ENCODE measurements at regions of chr3 and their contacts with region 1.

Region 1: DNA sequence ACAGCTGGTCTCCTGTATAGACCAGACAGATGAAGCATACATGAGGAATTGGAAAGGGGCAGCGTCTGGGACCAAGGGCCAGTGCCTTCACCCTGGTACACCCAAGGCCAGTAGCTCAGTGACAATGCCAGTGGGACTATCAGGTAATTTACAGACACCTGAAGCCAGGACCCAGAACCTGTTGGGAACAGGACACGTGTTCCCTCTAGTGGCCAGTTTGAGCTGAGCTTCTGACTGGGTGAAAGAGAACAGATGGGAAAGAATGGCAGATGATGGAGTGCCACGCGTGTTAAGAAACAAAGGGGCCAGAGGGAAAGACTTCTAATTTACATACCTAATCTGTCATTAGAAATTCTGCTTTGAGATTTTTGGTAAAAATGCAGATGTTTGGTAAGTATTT is 5.1 kb upstream of the SLC25A38 start:
- DNase-seq: peak in 8 of 9 donors; percentile 32 to 68 (median 62)
- ATAC-seq: peak; percentile 86
- H3K4me3 ChIP-seq: no peak overlapping the region
- H3K4me3 Mint-ChIP-seq: no peak overlapping the region
- H3K27ac ChIP-seq: no peak overlapping the region
- H3K27ac Mint-ChIP-seq: no peak overlapping the region
- H3K4me1 ChIP-seq: peaks cover 6% of the 10 kb centered on the region in 2 donors
- H3K4me1 Mint-ChIP-seq: peaks cover 0 to 20% (median 13%) of the 10 kb centered on the region in 7 donors
- H3K27me3 ChIP-seq: no peaks in the 10 kb centered on the region
- H3K27me3 Mint-ChIP-seq: peaks cover 0 to 3% (median 0%) of the 10 kb centered on the region in 5 donors

Region 2: DNA sequence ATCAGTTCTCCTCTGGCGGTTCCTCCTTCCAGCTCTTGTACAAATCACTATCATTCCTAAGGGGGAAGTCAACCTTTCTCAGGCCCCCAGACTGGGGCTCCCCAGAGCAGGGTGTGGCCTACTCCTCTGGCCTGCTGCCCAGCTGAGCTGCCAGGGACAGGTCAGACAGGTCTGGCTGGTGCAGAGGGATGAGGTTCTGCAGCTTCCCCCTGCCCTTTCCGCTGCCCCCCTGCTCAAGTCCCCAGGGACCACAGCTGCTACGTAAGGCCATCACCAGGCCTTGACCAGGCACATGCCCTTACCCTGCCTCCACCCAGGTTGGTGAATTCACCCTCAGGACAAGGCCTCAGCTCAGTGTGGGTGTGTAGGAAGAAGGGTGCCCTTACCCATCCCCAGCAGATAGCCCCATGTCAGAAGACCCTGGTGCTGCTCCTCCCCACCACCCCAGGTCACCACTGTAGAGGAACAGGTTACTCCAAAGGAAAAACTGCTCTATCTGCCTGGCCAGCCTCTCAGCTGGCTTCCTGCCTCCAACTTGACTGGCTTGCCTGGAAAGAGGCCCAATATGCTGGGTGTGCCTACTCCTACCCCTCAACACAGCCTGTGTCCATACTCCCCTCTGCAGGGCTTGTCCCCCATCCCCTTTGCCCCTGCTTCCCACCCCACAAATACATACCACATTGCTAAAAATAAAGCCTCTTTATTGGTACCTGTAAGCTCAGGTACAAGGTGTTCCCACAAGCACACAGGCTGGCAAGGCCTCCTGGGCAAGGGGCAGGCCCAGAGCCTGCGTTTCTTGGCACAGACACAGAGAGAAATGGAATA is 236.7 kb before region 1 on chr3:
- CTCF ChIA-PET with region 1: no interaction called
- POLR2A ChIA-PET with region 1: no interaction called
- intact Hi-C with region 1: no loop called
- DNase-seq: peak in 1 of 9 donors; percentile 20
- ATAC-seq: peak; percentile 45
- H3K4me3 ChIP-seq: no peak overlapping the region
- H3K4me3 Mint-ChIP-seq: peak overlapping the region in 1 of 10 donors; percentile 29
- H3K27ac ChIP-seq: no peak overlapping the region
- H3K27ac Mint-ChIP-seq: peak overlapping the region in 8 of 9 donors; percentile 32 to 85 (median 60)
- H3K4me1 ChIP-seq: peaks cover 0 to 6% of the 10 kb centered on the region in 2 donors
- H3K4me1 Mint-ChIP-seq: peaks cover 21 to 34% (median 27%) of the 10 kb centered on the region in 7 donors
- H3K27me3 ChIP-seq: no peaks in the 10 kb centered on the region
- H3K27me3 Mint-ChIP-seq: no peaks in the 10 kb centered on the region

Region 3: DNA sequence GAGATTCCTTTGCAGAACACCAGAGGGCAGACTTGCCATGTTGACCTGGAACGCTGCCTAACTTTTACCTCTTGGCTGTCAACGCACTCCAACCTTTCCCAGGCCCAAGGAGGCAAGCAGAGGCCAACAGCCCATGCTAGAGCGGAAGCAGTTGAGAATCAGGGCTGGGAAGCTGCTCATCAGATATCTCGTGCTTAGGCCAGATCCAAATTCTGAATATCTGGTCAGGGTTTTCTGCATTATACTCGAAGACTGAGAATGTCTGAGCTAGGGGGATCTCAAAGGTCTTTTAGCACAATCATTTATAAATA is 188.2 kb before region 1 on chr3:
- CTCF ChIA-PET with region 1: interaction called, 7 read pairs
- POLR2A ChIA-PET with region 1: no interaction called
- intact Hi-C with region 1: loop called in 1 of 2 experiments (anchors 1 kb)
- DNase-seq: peak; percentile 26 to 63 (median 55)
- ATAC-seq: peak; percentile 80
- H3K4me3 ChIP-seq: no peak overlapping the region
- H3K4me3 Mint-ChIP-seq: no peak overlapping the region
- H3K27ac ChIP-seq: no peak overlapping the region
- H3K27ac Mint-ChIP-seq: peak overlapping the region in 6 of 9 donors; percentile 1 to 79 (median 29)
- H3K4me1 ChIP-seq: peaks cover 0 to 5% of the 10 kb centered on the region in 2 donors
- H3K4me1 Mint-ChIP-seq: peaks cover 4 to 18% (median 6%) of the 10 kb centered on the region in 7 donors
- H3K27me3 ChIP-seq: no peaks in the 10 kb centered on the region
- H3K27me3 Mint-ChIP-seq: no peaks in the 10 kb centered on the region

Region 4: DNA sequence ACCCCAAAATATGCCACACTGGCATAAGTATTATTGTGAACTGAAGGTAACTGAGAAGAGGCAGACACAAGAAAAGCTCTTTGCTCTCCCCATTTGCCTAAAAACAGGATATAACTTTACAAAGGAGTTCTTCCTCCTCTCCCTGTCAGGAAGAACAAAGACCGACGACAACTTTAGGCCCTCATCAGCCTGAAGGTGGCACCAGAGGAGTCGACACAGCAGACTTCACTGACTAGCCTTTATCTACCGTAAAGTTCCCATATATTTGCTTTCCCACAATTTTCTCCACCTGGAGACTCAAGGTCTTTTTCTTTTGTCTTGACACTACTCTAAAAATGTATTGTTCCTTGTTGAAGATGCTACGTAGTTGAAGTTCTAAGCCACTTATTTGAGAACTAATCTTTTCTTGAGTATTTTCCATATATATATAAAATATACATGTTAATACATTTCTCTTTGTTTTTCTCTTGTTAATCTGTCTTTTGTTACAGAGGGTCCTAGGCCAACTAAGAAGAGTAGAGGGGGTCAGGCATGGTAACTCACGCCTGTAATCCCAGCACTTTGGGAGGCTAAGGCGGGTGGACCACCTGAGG is 169.5 kb before region 1 on chr3:
- CTCF ChIA-PET with region 1: no interaction called
- POLR2A ChIA-PET with region 1: no interaction called
- intact Hi-C with region 1: loop called (anchors 5 kb)
- DNase-seq: peak in 5 of 9 donors; percentile 12 to 36 (median 22)
- ATAC-seq: peak; percentile 70
- H3K4me3 ChIP-seq: no peak overlapping the region
- H3K4me3 Mint-ChIP-seq: no peak overlapping the region
- H3K27ac ChIP-seq: no peak overlapping the region
- H3K27ac Mint-ChIP-seq: no peak overlapping the region
- H3K4me1 ChIP-seq: peaks cover 0 to 6% of the 10 kb centered on the region in 2 donors
- H3K4me1 Mint-ChIP-seq: peaks cover 0 to 25% (median 7%) of the 10 kb centered on the region in 7 donors
- H3K27me3 ChIP-seq: no peaks in the 10 kb centered on the region
- H3K27me3 Mint-ChIP-seq: peaks cover 0 to 32% (median 3%) of the 10 kb centered on the region in 5 donors

Region 5: GRCh38 chr3:39398700-39399099 is 20.6 kb after region 1 on chr3:
- CTCF ChIA-PET with region 1: no interaction called
- POLR2A ChIA-PET with region 1: no interaction called
- intact Hi-C with region 1: no loop called
- DNase-seq: no peak
- ATAC-seq: no peak
- H3K4me3 ChIP-seq: no peak overlapping the region
- H3K4me3 Mint-ChIP-seq: no peak overlapping the region
- H3K27ac ChIP-seq: no peak overlapping the region
- H3K27ac Mint-ChIP-seq: peak overlapping the region in 1 of 9 donors; percentile 32
- H3K4me1 ChIP-seq: no peaks in the 10 kb centered on the region
- H3K4me1 Mint-ChIP-seq: peaks cover 0 to 4% (median 0%) of the 10 kb centered on the region in 7 donors
- H3K27me3 ChIP-seq: no peaks in the 10 kb centered on the region
- H3K27me3 Mint-ChIP-seq: no peaks in the 10 kb centered on the region

Region 6: GRCh38 chr3:39434574-39434973 is 56.5 kb after region 1 on chr3:
- CTCF ChIA-PET with region 1: no interaction called
- POLR2A ChIA-PET with region 1: no interaction called
- intact Hi-C with region 1: no loop called
- DNase-seq: no peak
- ATAC-seq: no peak
- H3K4me3 ChIP-seq: no peak overlapping the region
- H3K4me3 Mint-ChIP-seq: no peak overlapping the region
- H3K27ac ChIP-seq: no peak overlapping the region
- H3K27ac Mint-ChIP-seq: no peak overlapping the region
- H3K4me1 ChIP-seq: no peaks in the 10 kb centered on the region
- H3K4me1 Mint-ChIP-seq: no peaks in the 10 kb centered on the region
- H3K27me3 ChIP-seq: no peaks in the 10 kb centered on the region
- H3K27me3 Mint-ChIP-seq: peaks cover 0 to 14% (median 4%) of the 10 kb centered on the region in 5 donors

Measured in naive thymus-derived CD4-positive, alpha-beta T cell (primary cell).